Posterior vena cava (tissue), 2 donors: ENCODE measurements at regions of chr5 and their contacts with region 1.

Region 1: DNA sequence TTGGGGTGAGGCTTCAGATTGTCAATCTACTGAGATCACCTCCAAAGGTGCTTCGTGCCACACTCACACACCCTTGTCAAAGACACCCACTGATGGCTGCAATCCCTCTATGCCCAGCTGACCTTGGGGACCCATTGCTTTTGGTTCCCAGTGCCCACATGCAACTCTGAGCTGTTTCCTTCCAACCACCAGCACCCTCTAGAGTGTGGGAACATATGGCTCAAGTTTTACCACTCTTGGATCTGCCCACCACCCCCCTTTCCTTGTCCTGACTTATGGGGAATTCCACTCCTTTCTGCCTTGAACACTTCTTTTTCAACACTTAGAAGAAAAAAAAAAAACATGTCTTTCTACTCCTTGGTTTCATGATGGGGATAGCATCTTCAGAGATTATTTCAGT is 360.2 kb downstream of the ENC1 start:
- DNase-seq: no peak

Region 2: GRCh38 chr5:74306845-74307244 is 26.5 kb after region 1 on chr5:
- intact Hi-C with region 1: loop called in 1 of 2 experiments (anchors 1 kb)
- DNase-seq: no peak

Region 3: GRCh38 chr5:74378464-74378863 is 98.2 kb after region 1 on chr5:
- intact Hi-C with region 1: no loop called
- DNase-seq: no peak